ENCODE measurements at regions of chr5 and their contacts with region 1.

Region 1: GRCh38 chr5:94111209-94112004 is 370.0 kb upstream of the POU5F2 start:
- DNase-seq: peak; percentile 93 to 95
- ATAC-seq: peak; percentile 98 to 100 (median 99)
- H3K4me3 ChIP-seq: peak overlapping the region; percentile 67 to 91 (median 80)
- H3K27ac ChIP-seq: peak overlapping the region; percentile 61 to 94 (median 90)
- H3K4me1 ChIP-seq: peaks cover 0 to 17% (median 8%) of the 10 kb centered on the region in 9 donors
- H3K27me3 ChIP-seq: no peaks in the 10 kb centered on the region
- CTCF ChIP-seq: peak in 6 of 9 donors; percentile 6 to 48 (median 40)

Region 2: DNA sequence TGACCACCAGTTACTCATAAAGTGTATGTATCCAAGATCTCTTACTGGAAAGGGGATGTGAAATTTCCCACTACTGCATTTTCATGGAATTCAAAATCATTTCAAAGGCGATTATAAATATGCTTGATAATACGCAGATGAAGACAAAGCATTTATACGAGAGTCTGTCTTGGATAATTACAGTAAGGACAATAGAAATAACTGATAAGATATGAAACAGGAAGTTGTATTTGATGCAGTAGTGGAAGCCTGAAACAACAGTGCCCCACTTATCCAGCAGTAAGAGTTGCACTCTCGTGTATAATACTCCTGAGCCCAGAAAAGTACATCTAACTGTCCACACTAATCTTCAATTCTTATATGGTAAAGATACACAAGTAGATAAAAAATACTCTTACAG is 181.3 kb before region 1 on chr5:
- intact Hi-C with region 1: loop called in 1 of 10 experiments (anchors 5 kb)
- DNase-seq: no peak
- ATAC-seq: no peak
- H3K4me3 ChIP-seq: no peak overlapping the region
- H3K27ac ChIP-seq: no peak overlapping the region
- H3K4me1 ChIP-seq: peaks cover 0 to 5% (median 0%) of the 10 kb centered on the region in 9 donors
- H3K27me3 ChIP-seq: no peaks in the 10 kb centered on the region
- CTCF ChIP-seq: no peak